Activated CD4-positive, alpha-beta T cell treated with anti-CD3 and anti-CD28 coated beads, Interleukin-2, amount 10 ng/mL, durations not matched to agents 24 days and 14 days (primary cell): ENCODE measurements at regions of chr1 and their contacts with region 1.

Region 1: DNA sequence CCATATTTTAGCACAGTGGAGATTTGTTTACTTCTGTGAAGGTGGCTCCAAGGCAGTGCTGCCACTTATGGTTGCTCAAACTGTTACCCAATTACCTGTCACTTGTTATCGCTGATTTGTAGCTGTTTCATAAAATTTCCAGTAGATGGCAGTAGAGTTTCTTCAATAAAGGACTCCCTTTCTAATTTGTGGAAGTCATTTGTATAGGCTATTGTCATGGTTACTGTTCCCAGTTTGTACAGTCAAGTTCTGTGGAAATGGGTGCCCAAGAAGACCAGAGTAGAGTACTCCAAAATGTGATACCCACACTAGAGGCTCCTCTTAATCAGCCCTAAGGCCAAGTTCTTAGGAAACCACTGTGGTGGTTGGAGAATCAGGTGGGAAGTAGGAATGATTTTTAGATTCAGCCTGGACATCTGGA is 186.1 kb downstream of the CLEC20A start:
- DNase-seq: peak; percentile 58
- H3K4me3 Mint-ChIP-seq: no peak overlapping the region
- H3K27ac Mint-ChIP-seq: no peak overlapping the region
- H3K4me1 Mint-ChIP-seq: no peaks in the 10 kb centered on the region
- H3K27me3 Mint-ChIP-seq: peaks cover 2% of the 10 kb centered on the region

Region 2: DNA sequence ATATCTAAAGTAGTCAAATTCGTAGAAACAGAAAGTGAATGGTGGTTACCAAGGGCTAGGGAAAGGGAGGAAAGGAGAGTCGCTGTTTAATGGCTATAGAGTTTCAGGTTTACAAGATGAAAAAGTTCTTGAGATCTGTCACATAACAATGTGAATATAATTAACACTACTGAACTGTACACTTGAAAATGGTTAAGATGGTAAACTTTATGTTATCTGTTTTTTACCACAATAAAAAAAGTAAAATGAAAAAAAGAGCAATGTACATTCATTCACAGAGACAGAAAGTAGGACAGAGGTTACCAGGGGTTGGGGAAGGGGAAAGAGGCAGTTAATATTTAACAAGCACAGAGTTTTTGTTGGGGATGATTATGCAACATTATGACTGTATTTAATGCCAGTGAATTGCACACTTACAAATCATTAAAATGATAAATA is 287.5 kb before region 1 on chr1:
- intact Hi-C with region 1: no loop called
- DNase-seq: no peak
- H3K4me3 Mint-ChIP-seq: no peak overlapping the region
- H3K27ac Mint-ChIP-seq: no peak overlapping the region
- H3K4me1 Mint-ChIP-seq: no peaks in the 10 kb centered on the region
- H3K27me3 Mint-ChIP-seq: no peaks in the 10 kb centered on the region

Region 3: GRCh38 chr1:178501705-178502329 is 191.1 kb after region 1 on chr1:
- intact Hi-C with region 1: loop called (anchors 2 kb)
- DNase-seq: peak; percentile 87
- H3K4me3 Mint-ChIP-seq: no peak overlapping the region
- H3K27ac Mint-ChIP-seq: no peak overlapping the region
- H3K4me1 Mint-ChIP-seq: no peaks in the 10 kb centered on the region
- H3K27me3 Mint-ChIP-seq: no peaks in the 10 kb centered on the region